ENCODE measurements at regions of chr6 and their contacts with region 1.

Region 1: DNA sequence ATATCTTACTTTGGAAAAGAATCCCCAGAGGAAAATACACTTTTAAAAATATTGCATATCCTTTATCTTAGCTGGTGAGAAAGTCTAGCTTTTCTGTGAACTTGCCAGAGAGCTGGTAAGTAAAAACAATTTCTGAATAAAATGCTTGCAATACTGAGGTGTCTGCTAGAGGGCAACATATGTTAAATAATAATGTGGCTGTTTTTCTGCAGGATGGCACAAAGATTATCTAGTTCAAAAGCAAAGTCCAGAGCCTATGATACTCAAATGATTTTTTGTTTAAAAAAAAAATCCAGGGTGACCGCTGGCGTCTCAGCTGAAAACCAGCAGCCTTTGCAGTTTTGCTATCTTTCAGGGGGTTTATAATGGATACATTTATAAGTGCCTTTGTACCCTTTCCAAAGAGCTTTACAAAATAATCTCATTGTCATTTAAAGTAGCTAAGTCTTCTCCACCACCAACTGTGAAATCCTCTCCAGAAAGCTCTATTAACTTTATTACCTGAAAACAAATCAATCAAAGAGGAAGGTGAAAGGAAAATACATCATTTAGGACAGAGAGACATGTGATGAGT is 194.9 kb downstream of the PHACTR1 start:
- ATAC-seq: no peak
- H3K4me3 ChIP-seq: no peak overlapping the region
- H3K27ac ChIP-seq: no peak overlapping the region
- H3K4me1 ChIP-seq: peaks cover 3 to 10% of the 10 kb centered on the region in 2 donors

Region 2: GRCh38 chr6:12528581-12529363 is 382.7 kb before region 1 on chr6:
- in situ Hi-C with region 1: no loop called
- ATAC-seq: no peak
- H3K4me3 ChIP-seq: no peak overlapping the region
- H3K27ac ChIP-seq: no peak overlapping the region
- H3K4me1 ChIP-seq: no peaks in the 10 kb centered on the region

Region 3: DNA sequence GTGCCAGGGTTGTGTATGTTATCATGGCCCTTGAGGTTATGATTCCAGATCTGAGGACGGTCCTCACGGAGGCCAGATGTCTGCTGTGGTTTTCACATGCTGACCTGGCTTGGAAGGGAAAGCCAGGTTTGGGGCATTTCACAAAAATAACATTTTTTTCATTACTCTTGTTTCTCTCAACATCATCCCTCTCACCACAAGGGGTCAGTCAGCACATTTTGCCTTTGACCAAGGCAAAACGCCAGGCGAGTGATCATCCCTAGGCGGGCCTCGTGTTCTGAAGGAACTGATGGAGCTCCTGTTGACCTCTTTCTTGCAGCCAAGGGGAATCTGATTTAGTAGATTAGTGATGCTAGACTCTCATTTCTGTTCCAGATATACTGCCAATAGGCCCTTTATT is 283.4 kb after region 1 on chr6:
- in situ Hi-C with region 1: loop called in 1 of 9 experiments (anchors 25 kb)
- ATAC-seq: peak in 4 of 8 experiments; percentile 9 to 83 (median 70)
- H3K4me3 ChIP-seq: no peak overlapping the region
- H3K27ac ChIP-seq: no peak overlapping the region
- H3K4me1 ChIP-seq: peaks cover 3 to 22% of the 10 kb centered on the region in 2 donors

Region 4: GRCh38 chr6:13277836-13278563 is 366.5 kb after region 1 on chr6:
- in situ Hi-C with region 1: loop called in 1 of 9 experiments (anchors 25 kb)
- ATAC-seq: peak in 2 of 8 experiments; percentile 30 to 39
- H3K4me3 ChIP-seq: no peak overlapping the region
- H3K27ac ChIP-seq: no peak overlapping the region
- H3K4me1 ChIP-seq: peaks cover 4 to 5% of the 10 kb centered on the region in 2 donors